ENCODE measurements at regions of chr10 and their contacts with region 1.

Region 1: GRCh38 chr10:110076559-110077318 is 69.0 kb downstream of the ADD3 start:
- DNase-seq: no peak
- H3K4me3 Mint-ChIP-seq: peak overlapping the region; percentile 82
- H3K27ac Mint-ChIP-seq: peak overlapping the region; percentile 93
- H3K4me1 Mint-ChIP-seq: peaks cover 89% of the 10 kb centered on the region
- H3K27me3 Mint-ChIP-seq: no peaks in the 10 kb centered on the region

Region 2: DNA sequence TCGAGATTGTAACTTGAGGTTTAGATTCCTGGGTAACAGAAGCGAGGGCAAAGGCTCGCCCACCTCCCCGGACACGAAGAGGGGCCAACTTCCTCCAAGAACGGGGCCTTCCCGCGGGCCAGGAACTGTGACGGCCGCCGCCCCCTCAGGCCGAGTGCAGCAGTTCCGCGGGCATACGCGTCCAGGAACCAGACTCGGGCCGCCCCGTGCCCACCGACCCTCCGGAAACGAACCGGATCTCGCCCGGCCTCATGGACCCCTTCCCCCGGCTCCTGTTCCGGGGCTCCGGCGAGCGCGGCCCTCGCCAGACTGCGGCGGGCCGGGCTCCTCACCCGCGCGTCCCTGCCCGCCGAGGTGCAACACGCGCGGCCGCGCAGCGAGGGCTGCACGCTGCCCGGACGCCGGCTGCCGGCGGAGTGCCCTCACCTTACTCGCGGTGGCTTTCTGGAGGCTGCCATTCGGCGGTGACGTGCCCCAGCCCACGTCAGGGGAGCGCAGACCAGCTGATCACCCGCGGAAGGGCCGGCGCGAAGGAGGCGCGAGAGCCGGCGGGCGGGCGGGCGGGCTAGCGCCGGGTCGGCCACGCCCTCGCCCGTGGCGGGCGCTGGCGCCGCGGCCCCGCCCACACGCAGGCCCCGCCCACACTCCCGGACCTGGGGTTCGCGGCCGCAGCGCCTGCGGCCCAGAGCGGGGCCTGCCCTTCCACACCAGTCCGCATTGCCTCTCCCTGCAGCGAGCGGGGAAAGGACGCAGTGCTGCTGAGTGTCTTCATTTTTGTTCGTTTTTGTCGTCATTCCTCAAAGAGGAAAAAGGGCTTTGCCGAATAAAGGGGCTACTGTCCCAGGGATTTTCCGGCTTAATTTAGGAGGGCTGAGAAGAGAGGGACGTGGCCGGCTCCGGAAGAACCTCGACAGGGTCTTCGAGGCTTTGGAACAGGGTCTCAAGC is 153.5 kb before region 1 on chr10 and contains the start of gene XPNPEP1:
- intact Hi-C with region 1: loop called (anchors 5 kb)
- DNase-seq: peak; percentile 81
- H3K4me3 Mint-ChIP-seq: peak within 1 kb of the TSS; percentile 94
- H3K27ac Mint-ChIP-seq: peak within 1 kb of the TSS; percentile 92
- H3K4me1 Mint-ChIP-seq: peaks cover 58% of the 10 kb centered on the region
- H3K27me3 Mint-ChIP-seq: peaks cover 5% of the 10 kb centered on the region
- total RNA-seq, gene XPNPEP1: 85.1 and 93.2 TPM in 2 replicates

Region 3: GRCh38 chr10:110035070-110035921 is 41.4 kb before region 1 on chr10:
- intact Hi-C with region 1: loop called (anchors 1 kb)
- DNase-seq: no peak
- H3K4me3 Mint-ChIP-seq: no peak overlapping the region
- H3K27ac Mint-ChIP-seq: no peak overlapping the region
- H3K4me1 Mint-ChIP-seq: peaks cover 54% of the 10 kb centered on the region
- H3K27me3 Mint-ChIP-seq: no peaks in the 10 kb centered on the region

Region 4: GRCh38 chr10:110101464-110102144 is 24.9 kb after region 1 on chr10:
- intact Hi-C with region 1: loop called (anchors 1 kb)
- DNase-seq: no peak
- H3K4me3 Mint-ChIP-seq: no peak overlapping the region
- H3K27ac Mint-ChIP-seq: peak overlapping the region; percentile 89
- H3K4me1 Mint-ChIP-seq: peaks cover 50% of the 10 kb centered on the region
- H3K27me3 Mint-ChIP-seq: no peaks in the 10 kb centered on the region

Region 5: DNA sequence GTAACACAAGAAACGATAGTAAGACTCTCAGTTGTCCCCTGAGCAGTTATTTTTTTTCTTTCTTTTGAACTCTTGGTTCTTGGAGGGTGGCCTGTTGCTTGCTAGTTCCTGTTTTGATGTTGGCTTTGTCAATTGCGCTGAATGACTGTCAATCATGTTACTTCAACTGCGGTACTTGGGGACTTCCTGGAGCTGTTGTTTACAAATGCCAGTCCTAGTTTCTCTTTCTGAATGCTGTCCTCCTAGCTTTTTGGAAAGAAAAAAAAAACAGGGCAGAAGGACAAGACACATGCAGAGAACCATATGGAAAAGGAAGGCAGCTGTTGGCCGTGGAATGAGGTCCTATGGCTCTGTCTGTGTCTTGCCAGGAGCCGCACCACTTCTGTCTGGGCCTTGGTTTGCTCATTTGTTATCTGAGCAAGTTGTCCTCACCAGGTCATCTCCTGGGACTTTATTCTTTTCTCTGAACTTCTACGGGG is 788.0 kb after region 1 on chr10:
- intact Hi-C with region 1: loop called (anchors 10 kb)
- DNase-seq: peak; percentile 69
- H3K4me3 Mint-ChIP-seq: peak overlapping the region; percentile 75
- H3K27ac Mint-ChIP-seq: peak overlapping the region; percentile 95
- H3K4me1 Mint-ChIP-seq: peaks cover 96% of the 10 kb centered on the region
- H3K27me3 Mint-ChIP-seq: no peaks in the 10 kb centered on the region